A673 (cell line): ENCODE measurements at regions of chr11 and their contacts with region 1.

Region 1: GRCh38 chr11:67060111-67060522 is 3.5 kb downstream of the RHOD start:
- DNase-seq: no peak
- H3K4me3 ChIP-seq: no peak overlapping the region
- H3K27ac ChIP-seq: no peak overlapping the region
- H3K4me1 ChIP-seq: peaks cover 7% of the 10 kb centered on the region
- H3K27me3 ChIP-seq: no peaks in the 10 kb centered on the region
- CTCF ChIP-seq: no peak

Region 2: GRCh38 chr11:67413266-67413849 is 353.2 kb after region 1 on chr11:
- CTCF ChIA-PET with region 1: no interaction called
- POLR2A ChIA-PET with region 1: interaction called, 10 read pairs
- intact Hi-C with region 1: no loop called
- DNase-seq: no peak
- H3K4me3 ChIP-seq: no peak overlapping the region
- H3K27ac ChIP-seq: no peak overlapping the region
- H3K4me1 ChIP-seq: peaks cover 25% of the 10 kb centered on the region
- H3K27me3 ChIP-seq: no peaks in the 10 kb centered on the region
- CTCF ChIP-seq: no peak